CD14-positive monocyte (primary cell): ENCODE measurements at regions of chr15 and their contacts with region 1.

Region 1: DNA sequence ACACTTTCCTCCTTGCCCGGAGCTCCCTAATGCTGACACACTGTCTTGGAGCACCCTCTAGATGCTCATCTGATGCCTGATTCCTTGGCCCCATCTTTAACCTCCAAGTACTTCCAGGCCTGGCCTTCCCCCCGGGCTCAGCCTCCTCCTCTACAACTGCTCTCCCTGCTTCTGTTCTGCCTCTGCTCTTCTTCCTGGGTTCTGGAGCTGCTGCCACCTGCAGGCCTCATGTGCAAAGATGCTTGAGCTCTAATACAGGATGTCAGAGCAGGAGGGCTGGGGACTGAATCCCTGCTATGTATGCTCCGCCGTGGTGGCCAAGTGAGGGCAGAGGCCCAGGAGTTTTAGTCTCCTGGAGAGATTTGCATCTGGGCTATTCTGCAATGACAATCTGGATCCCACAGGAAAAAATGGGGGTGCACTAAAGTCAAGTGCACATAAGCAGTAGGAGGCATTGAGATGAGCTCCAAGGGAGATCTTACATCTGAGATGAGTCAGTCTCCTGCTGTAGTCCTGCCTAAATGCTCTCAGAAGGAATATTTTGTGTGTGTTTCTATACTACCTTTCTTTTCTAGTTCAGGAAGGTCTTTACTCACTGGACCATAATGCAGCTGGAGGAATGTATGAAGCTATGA is 296.3 kb downstream of the UACA start:
- DNase-seq: peak; percentile 57 to 69 (median 60)
- H3K4me3 ChIP-seq: no peak overlapping the region
- H3K4me3 Mint-ChIP-seq: no peak overlapping the region
- H3K27ac ChIP-seq: no peak overlapping the region
- H3K27ac Mint-ChIP-seq: peak overlapping the region in 4 of 7 donors; percentile 23 to 83 (median 64)
- H3K4me1 ChIP-seq: peaks cover 27 to 43% of the 10 kb centered on the region in 2 donors
- H3K4me1 Mint-ChIP-seq: peaks cover 45% of the 10 kb centered on the region
- H3K27me3 ChIP-seq: no peaks in the 10 kb centered on the region
- H3K27me3 Mint-ChIP-seq: peaks cover 6 to 23% (median 7%) of the 10 kb centered on the region in 3 donors
- CTCF ChIP-seq: peak; percentile 58

Region 2: DNA sequence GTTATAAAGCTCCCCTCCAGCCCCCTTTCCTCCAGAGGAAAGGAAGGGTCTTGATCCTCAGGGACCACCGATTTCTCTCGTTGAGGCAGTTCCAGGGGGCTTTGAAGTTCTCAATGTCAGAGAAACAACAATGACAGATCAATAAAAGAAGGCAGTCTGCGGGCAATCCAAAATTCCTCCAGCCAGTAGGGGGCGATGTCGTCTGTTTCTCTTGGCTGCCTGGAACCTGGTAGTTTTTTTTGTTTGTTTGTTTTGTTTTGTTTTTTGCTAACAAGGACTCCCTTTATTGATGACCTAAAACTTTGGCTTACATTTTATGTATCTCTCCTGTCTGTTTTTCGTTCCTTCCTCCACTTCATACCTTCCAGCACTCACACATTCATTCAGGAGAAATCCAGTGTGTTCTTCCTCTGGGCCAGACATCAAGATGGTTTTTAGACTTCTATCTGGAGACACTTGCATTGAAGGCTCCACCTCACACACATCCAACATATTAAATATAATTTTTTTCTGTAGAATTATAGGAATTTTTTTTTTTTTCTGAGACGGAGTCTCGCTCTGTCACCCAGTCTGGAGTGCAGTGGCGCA is 737.8 kb before region 1 on chr15:
- intact Hi-C with region 1: loop called in 1 of 2 experiments (anchors 10 kb)
- DNase-seq: peak in 2 of 3 donors; percentile 48 to 58
- H3K4me3 ChIP-seq: no peak overlapping the region
- H3K4me3 Mint-ChIP-seq: no peak overlapping the region
- H3K27ac ChIP-seq: no peak overlapping the region
- H3K27ac Mint-ChIP-seq: peak overlapping the region in 6 of 7 donors; percentile 47 to 76 (median 66)
- H3K4me1 ChIP-seq: peaks cover 50 to 52% of the 10 kb centered on the region in 2 donors
- H3K4me1 Mint-ChIP-seq: peaks cover 58% of the 10 kb centered on the region
- H3K27me3 ChIP-seq: no peaks in the 10 kb centered on the region
- H3K27me3 Mint-ChIP-seq: peaks cover 0 to 4% (median 0%) of the 10 kb centered on the region in 3 donors
- CTCF ChIP-seq: peak; percentile 80

Region 3: DNA sequence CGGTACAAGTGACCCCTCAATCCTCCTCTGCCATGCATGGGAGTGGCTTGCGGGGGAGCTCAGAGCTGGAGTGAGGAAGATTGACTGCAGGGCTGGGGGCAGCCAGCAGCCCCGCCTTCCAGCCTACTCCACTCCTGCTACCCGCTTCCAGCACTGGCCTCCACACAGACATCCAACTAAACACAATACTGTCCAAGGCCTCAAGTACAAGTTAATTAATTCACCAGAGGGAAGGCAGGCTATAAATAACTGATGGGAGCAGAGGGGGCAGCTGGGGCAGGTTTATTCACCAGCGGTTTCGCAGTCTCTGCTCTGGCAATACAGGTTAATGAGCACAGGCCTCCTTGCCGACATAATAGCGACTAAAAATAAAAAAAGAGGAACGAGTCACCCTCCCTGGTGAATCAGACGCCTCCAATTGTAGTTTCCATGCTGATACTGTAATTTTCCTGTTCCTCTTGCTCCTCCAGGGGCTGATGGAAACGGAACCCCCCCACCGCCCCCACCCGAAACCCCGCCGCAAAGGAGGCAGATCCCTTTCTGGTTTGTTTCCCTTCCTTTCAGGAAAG is 202.9 kb before region 1 on chr15:
- intact Hi-C with region 1: loop called (anchors 2 to 10 kb)
- DNase-seq: peak; percentile 86 to 94 (median 92)
- H3K4me3 ChIP-seq: peak overlapping the region in 1 of 3 experiments; percentile 44
- H3K4me3 Mint-ChIP-seq: peak overlapping the region; percentile 31 to 77
- H3K27ac ChIP-seq: peak overlapping the region; percentile 79 to 85
- H3K27ac Mint-ChIP-seq: peak overlapping the region; percentile 86 to 100 (median 100)
- H3K4me1 ChIP-seq: peaks cover 86 to 95% of the 10 kb centered on the region in 2 donors
- H3K4me1 Mint-ChIP-seq: peaks cover 89% of the 10 kb centered on the region
- H3K27me3 ChIP-seq: peaks cover 0 to under 1% of the 10 kb centered on the region in 2 donors
- H3K27me3 Mint-ChIP-seq: peaks cover 9 to 17% (median 9%) of the 10 kb centered on the region in 3 donors
- CTCF ChIP-seq: no peak

Region 4: GRCh38 chr15:70488002-70488605 is 21.1 kb after region 1 on chr15:
- intact Hi-C with region 1: loop called (anchors 1 kb)
- DNase-seq: peak; percentile 80 to 84 (median 82)
- H3K4me3 ChIP-seq: no peak overlapping the region
- H3K4me3 Mint-ChIP-seq: peak overlapping the region in 1 of 2 donors; percentile 53
- H3K27ac ChIP-seq: peak overlapping the region; percentile 93 to 96
- H3K27ac Mint-ChIP-seq: peak overlapping the region; percentile 97 to 100 (median 99)
- H3K4me1 ChIP-seq: peaks cover 87 to 96% of the 10 kb centered on the region in 2 donors
- H3K4me1 Mint-ChIP-seq: peaks cover 92% of the 10 kb centered on the region
- H3K27me3 ChIP-seq: no peaks in the 10 kb centered on the region
- H3K27me3 Mint-ChIP-seq: peaks cover 9 to 21% (median 11%) of the 10 kb centered on the region in 3 donors
- CTCF ChIP-seq: peak; percentile 94

Region 5: DNA sequence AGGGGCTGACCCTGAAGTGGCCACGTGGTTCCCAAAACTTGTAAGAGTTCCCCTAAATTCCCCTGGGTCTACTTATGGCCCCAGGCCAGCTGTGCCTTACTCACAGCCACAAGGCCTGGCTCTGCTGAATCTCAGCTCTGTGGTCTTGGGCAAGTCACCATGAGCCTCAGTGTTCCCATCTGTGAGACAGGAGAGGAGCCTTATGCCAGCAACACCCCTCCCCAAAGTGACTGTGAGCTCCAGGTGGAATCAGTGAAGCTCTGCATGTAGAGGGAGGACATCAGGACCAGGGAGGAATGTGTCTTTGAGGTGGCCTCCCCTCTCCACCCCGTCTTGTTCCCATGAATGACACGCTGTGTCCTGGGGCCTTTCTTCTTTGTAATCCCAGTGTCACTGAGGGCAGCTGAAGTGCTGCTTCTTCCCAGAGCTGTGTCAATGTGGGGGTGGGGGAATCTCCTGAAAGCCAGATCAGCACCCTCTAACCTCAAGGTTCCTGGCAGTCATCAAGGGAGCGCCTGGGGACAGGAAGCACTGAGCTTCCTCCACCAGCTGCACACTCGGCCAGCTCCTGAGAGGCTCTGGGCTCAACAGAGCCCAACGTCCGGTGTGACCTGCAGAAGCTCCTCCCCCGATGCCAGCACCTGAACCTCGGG is 37.4 kb after region 1 on chr15:
- intact Hi-C with region 1: loop called (anchors 1 to 5 kb)
- DNase-seq: peak; percentile 88 to 96 (median 93)
- H3K4me3 ChIP-seq: peak overlapping the region in 1 of 3 experiments; percentile 47
- H3K4me3 Mint-ChIP-seq: peak overlapping the region; percentile 45 to 74
- H3K27ac ChIP-seq: peak overlapping the region; percentile 50 to 73
- H3K27ac Mint-ChIP-seq: peak overlapping the region; percentile 87 to 96 (median 93)
- H3K4me1 ChIP-seq: peaks cover 64 to 67% of the 10 kb centered on the region in 2 donors
- H3K4me1 Mint-ChIP-seq: peaks cover 73% of the 10 kb centered on the region
- H3K27me3 ChIP-seq: peaks cover 0 to 2% of the 10 kb centered on the region in 2 donors
- H3K27me3 Mint-ChIP-seq: peaks cover 5 to 19% (median 15%) of the 10 kb centered on the region in 3 donors
- CTCF ChIP-seq: no peak